ENCODE measurements at regions of chr10 and their contacts with region 1.

Region 1: DNA sequence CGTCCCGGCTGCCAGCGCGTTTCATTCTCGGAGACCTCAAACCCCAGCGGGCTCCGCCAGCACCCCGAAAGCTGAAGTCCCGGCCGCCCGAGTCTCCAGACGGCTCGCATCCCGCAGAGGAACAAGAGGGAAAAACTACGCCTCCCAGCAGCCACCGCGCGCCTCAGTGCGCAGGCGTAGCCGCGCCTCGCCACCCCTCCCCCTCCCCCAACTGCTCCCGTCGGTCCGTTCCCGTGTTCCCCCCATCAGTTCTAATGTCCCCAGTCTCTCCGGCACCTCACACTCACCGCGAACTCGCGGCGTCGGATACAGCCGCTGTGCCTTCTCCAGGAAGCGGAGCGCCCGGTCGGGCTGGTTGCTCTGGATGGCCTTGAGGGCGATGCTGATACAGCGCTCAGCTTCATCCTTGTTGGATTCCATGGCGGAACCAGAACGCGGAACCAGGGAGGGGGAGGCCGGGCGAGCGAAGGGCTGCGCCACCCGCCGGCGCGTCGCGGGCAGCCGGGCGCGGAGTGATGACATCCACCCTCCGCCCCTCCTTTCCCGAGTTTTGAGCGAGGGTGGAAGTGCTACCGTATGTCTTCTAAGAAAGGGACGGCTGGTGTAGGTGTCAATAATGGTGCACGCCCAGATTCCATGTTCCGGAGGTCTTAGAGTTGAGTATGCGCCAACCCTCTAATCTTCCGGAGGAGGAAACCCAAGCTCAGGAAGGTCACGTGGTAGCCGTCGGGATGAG is at the start of gene DNAJB12:
- DNase-seq: peak; percentile 97

Region 2: DNA sequence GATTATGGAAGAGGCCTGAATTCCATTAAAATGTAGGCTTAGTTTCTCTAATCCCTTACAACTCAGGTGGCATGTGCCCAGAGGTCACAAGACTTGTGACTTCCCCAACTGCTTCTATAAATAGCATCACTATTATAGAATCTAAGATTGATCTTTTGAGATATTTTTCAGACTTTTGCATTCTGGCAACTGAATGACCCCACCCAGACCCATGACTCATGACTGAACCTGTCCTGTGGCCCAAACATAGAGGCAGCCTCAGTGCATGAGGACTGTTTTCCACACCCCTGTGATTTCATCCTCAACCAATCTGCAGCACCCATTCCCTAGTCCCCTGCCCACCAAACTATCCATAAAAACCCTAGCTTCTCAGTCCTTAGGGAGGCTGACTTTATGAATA is 186.6 kb after region 1 on chr10:
- in situ Hi-C with region 1: no loop called
- DNase-seq: no peak

Region 3: GRCh38 chr10:72852508-72852907 is 497.9 kb after region 1 on chr10:
- in situ Hi-C with region 1: loop called (anchors 25 kb)
- DNase-seq: no peak

Measured in KBM-7 (cell line).